ENCODE measurements at regions of chr14 and their contacts with region 1.

Region 1: GRCh38 chr14:20469242-20469889 is at the start of gene PNP:
- DNase-seq: peak; percentile 91
- H3K4me3 Mint-ChIP-seq: peak within 1 kb of the TSS; percentile 88
- H3K27ac Mint-ChIP-seq: peak within 1 kb of the TSS; percentile 91
- H3K4me1 Mint-ChIP-seq: peaks cover 42% of the 10 kb centered on the region
- H3K27me3 Mint-ChIP-seq: no peaks in the 10 kb centered on the region
- total RNA-seq, gene PNP: 207 to 210 TPM

Region 2: GRCh38 chr14:20400965-20401593 is 68.3 kb before region 1 on chr14:
- CTCF ChIA-PET with region 1: no interaction called
- POLR2A ChIA-PET with region 1: no interaction called
- DNase-seq: peak; percentile 22
- H3K4me3 Mint-ChIP-seq: peak overlapping the region; percentile 61
- H3K27ac Mint-ChIP-seq: peak overlapping the region; percentile 91
- H3K4me1 Mint-ChIP-seq: peaks cover 42% of the 10 kb centered on the region
- H3K27me3 Mint-ChIP-seq: no peaks in the 10 kb centered on the region

Region 3: DNA sequence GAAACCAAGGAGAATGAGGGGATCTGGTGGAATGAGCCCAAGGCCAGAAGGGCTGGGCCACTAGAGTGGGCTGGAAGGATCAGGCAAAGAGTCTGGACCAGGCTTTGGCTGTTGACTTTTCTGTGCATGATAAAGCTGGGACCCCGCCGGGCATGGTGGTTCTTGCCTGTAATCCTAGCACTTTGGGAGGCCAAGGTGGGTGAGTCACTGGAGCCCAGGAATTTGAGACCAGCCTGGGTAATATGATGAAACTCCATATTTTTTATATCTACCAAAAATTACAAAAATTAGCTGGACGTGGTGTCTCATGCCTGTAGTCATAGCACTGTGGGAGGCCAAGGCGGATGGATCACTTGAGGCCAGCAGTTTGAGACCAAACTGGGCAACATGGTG is 33.0 kb before region 1 on chr14:
- CTCF ChIA-PET with region 1: no interaction called
- POLR2A ChIA-PET with region 1: no interaction called
- DNase-seq: no peak
- H3K4me3 Mint-ChIP-seq: no peak overlapping the region
- H3K27ac Mint-ChIP-seq: no peak overlapping the region
- H3K4me1 Mint-ChIP-seq: peaks cover 10% of the 10 kb centered on the region
- H3K27me3 Mint-ChIP-seq: peaks cover 4% of the 10 kb centered on the region

Region 4: GRCh38 chr14:20454516-20455354 is 14.6 kb before region 1 on chr14 and contains the starts of genes APEX1 and OSGEP:
- CTCF ChIA-PET with region 1: interaction called, 6 read pairs
- POLR2A ChIA-PET with region 1: interaction called, 95 read pairs
- DNase-seq: peak; percentile 99
- H3K4me3 Mint-ChIP-seq: no peak within 1 kb of the TSS
- H3K27ac Mint-ChIP-seq: no peak within 1 kb of the TSS
- H3K4me1 Mint-ChIP-seq: peaks cover 33% of the 10 kb centered on the region
- H3K27me3 Mint-ChIP-seq: no peaks in the 10 kb centered on the region
- total RNA-seq, gene APEX1: 91.9 to 103 TPM
- total RNA-seq, gene OSGEP: 35.8 to 40.3 TPM

Region 5: DNA sequence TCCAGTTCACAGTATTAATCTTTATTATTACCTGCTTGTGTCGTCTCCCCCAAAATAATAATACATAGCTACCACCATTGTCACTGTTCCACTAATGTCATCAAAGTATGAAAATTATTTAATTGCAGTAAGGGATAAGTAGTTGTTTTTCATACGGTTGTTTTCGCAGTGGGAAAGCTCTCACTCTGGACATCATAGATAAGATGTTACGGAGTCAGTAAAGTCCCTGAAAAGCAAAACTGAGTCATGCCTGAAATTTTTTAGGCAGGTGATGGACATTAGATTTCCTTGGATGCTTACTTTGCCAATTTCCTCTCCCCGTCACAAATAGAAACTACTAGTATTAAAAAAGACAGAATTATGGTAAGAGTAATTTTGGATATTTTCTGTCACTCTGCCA is 13.0 kb after region 1 on chr14:
- CTCF ChIA-PET with region 1: interaction called, 13 read pairs
- POLR2A ChIA-PET with region 1: interaction called, 66 read pairs
- DNase-seq: no peak
- H3K4me3 Mint-ChIP-seq: no peak overlapping the region
- H3K27ac Mint-ChIP-seq: no peak overlapping the region
- H3K4me1 Mint-ChIP-seq: peaks cover 34% of the 10 kb centered on the region
- H3K27me3 Mint-ChIP-seq: no peaks in the 10 kb centered on the region

Measured in activated CD4-positive, alpha-beta memory T cell treated with anti-CD3 and anti-CD28 coated beads, Interleukin-2, amount 10 ng/mL, durations not matched to agents 7 days and 5 days (primary cell).